ENCODE measurements at regions of chr10 and their contacts with region 1.

Region 1: DNA sequence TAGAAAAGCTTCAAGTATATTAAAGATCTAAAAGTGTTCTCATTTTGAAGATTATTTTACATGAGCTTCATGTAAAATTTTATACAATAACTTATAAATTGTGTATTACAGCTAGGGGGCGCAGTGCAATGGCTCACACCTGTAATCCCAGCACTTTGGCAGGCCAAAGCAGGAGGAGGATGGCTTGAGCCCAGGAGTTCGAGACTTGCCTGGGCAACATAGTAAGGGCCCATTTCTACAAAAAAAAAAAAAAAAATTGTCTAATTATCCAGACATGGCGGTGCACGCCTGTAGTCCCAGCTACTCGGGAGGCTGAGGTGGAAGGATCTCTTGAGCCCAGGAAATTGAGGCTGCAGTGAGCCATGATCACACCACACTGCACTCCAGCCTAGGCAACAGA is 16.6 kb downstream of the ACBD5 start:
- DNase-seq: no peak

Region 2: GRCh38 chr10:27153845-27154193 is 70.1 kb before region 1 on chr10:
- intact Hi-C with region 1: no loop called
- DNase-seq: no peak

Region 3: DNA sequence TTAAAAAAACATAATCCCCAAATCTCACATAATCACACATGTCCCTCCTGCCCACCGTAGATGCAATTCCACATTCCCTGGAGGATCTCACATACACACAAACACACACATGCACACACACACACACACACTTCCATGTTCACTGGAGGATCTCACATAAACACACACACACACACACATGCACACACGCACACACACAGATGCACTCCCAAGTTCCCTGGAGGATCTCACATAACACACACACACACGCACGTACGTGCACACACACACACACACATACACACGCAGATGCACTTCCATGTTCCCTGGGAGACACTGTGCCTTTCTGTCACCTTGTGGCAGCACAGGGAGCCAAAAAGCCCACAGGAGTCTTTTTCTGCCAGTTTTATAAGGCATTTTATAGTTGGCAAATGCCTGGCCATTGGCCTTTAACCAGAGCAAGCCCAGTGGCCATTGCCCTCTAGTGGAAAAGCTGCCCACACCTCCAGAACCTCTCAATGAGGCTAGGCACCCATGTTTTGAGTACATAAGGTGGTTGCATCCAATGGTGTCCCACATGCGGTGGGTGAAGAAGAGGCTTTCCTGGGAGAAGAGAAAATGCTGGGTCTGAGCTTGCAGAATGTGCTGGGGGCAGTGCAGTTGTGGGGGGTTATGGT is 132.1 kb after region 1 on chr10:
- intact Hi-C with region 1: loop called in 1 of 2 experiments (anchors 10 kb)
- DNase-seq: no peak